Prostate gland (tissue), 2 donors: ENCODE measurements at regions of chr1 and their contacts with region 1.

Region 1: DNA sequence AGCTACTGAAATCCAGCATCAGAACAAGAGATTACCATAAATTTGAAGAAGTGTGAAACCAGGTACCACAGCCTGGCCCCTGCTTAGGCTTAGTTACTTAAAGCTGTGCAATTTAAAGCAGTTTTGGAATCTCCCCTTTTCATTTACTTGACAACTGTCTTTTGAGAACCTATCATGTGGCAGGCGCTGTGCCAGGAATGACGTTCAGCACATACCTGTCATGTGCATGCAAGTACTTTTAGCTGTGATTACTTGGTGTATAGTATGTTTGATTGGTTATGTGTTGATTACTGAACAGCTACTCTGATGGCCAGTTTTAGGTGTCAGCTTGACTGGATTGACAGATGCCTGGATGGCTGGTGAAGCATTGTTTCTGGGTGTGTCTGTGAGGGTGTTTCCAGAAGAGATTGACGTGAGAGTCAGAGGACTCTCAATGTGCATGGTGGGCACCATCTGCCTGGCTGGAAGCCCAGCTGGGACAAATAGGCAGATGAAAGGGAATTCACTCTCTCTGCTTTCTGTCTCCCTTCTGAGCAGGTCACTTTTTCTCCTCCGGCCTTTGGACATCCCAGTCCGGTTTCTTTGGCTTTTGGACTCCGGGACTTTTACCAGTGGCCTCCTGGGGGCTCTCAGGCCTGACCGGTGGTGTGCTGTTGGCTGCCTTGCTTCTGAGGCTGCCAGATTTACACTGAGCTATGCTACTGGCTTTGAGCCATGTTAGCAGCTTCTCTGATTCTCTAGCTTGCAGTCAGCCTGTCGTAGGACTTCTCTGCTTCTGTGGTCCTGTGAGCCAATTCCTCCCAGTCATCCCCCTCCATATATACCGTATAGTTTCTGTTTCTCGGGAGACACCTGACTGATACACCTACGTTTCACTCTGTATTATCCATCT is 178.0 kb downstream of the RYR2 start:
- DNase-seq: no peak
- H3K4me3 ChIP-seq: no peak overlapping the region
- H3K27ac ChIP-seq: no peak overlapping the region
- H3K4me1 ChIP-seq: no peaks in the 10 kb centered on the region
- H3K27me3 ChIP-seq: no peaks in the 10 kb centered on the region
- CTCF ChIP-seq: no peak
- POLR2A ChIP-seq: no peak

Region 2: DNA sequence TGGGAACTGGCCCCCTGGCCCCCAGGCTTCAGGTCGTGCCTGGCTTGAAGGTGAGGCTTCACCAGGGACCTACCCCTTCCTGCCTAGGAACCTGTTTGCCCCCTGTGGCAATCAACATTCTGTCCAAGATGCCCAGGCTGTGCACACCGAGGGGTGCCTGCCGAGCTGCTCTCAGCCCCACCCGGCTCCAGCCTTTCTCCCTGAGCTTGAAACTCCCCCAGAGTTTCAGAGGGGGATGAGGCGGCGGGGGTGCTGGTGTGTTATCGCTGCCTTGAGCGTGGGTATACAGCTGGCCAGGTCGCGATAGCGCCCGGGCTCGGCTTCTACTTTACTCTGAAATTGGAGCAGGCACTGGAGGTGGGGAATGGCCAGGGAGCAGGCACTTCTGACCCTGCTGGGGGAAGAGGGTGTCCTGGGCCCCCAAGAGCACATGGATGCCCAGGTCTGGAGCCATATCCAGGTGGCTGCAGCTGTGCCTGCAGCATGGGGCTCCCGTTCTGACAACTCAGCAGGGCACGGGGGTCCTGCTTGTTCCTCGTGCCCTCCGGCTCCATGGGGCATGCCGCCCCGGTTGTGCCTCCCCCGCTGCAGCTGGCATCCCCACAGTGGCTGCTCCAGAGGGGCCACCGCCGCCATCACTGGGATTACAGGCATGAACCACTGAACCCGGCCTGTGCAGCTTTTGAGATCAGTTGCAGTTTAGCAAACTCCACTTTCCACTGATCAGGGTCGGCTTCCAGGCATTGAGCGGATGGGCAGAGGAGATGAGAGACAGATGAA is 148.2 kb before region 1 on chr1:
- intact Hi-C with region 1: no loop called
- DNase-seq: no peak
- H3K4me3 ChIP-seq: no peak overlapping the region
- H3K27ac ChIP-seq: no peak overlapping the region
- H3K4me1 ChIP-seq: no peaks in the 10 kb centered on the region
- H3K27me3 ChIP-seq: no peaks in the 10 kb centered on the region
- CTCF ChIP-seq: no peak
- POLR2A ChIP-seq: no peak

Region 3: DNA sequence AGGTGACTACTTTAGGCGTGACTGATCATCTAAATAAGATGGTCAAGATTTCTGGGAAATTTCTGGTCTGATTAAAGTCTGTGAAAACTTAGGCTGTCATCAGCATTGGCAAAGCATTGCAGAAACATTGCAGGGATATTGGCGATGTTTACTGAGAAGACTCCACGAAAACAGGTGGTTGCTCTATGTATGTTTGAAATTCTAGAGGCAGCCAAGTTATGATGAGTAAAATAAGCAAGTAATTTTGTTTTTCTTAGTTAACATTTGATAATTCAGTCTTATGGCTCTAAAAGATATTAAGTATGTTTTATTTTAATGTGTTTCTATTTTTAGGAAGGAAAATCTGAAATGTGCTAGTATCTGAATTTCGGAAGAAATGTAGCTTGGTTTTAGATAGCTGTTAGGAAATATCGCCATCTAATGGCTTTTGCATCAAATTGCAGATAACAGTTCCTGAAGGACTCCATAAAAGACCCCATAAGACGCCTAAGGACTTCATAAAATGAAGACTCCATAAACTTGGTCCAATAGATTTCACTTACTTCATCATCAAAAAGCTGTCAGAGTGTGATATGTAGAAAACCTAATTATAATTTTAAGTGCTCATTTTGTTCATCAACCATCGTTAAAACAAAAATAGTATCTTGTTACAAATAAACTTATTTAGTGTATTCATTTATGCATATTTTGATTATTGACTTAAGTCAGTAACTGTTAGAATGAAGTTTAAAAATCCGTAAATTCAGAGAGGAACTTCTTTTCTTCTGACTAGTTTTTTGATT is 166.6 kb after region 1 on chr1:
- intact Hi-C with region 1: loop called (anchors 10 kb)
- DNase-seq: no peak
- H3K4me3 ChIP-seq: no peak overlapping the region
- H3K27ac ChIP-seq: no peak overlapping the region
- H3K4me1 ChIP-seq: no peaks in the 10 kb centered on the region
- H3K27me3 ChIP-seq: no peaks in the 10 kb centered on the region
- CTCF ChIP-seq: peak; percentile 28 to 58 (median 39)
- POLR2A ChIP-seq: no peak